PC-9 (cell line): ENCODE measurements at regions of chr18 and their contacts with region 1.

Region 1: DNA sequence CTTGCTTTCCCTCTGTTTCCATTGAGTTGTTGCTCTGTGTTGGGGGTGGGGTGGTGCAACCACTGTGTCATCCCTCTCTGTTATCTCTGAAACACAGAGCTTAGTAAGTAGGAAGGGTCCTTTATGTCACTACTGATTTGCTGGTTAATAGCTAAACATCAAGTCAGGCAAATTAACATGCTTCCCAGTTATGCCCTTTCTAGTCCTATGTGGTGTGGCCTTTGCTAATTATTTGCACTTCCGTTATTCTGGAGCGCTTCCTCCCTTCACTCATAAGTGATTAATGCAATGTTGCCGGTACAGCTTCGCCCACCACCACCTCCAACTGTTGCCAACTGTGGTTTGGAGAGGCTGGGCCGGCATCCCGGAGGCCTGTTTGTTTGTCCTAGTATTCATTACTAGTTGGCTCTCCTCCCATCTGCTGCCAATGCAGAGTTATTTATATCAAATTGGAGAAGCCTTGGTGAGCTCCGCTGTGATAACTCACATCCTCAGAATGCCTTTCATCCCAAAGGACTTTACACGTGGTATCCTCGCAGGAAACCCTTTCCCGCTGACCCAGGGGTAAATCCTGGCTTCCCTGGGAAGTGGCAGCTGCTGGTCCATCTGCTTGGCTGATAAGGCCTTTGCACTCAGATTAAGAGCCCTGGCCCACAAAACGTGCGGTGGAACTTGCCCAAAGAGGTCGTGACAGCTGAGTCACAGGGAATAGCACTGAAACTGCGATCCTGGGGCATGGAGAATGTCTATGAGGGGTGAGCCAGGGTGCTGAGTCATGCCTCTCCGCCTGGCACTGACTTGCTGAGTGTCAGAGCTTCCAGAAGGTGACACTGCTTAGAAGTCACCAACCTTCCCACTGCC is 72.0 kb upstream of the ZCCHC2 start:
- DNase-seq: peak; percentile 75 to 95
- H3K4me3 ChIP-seq: no peak overlapping the region; the same call in 1 of the 2 replicates
- H3K27ac ChIP-seq: peak overlapping the region; percentile 92
- H3K4me1 ChIP-seq: peaks cover 48% of the 10 kb centered on the region
- H3K27me3 ChIP-seq: no peaks in the 10 kb centered on the region
- CTCF ChIP-seq: no peak

Region 2: GRCh38 chr18:62486304-62486964 is 35.7 kb after region 1 on chr18:
- CTCF ChIA-PET with region 1: no interaction called
- POLR2A ChIA-PET with region 1: no interaction called
- intact Hi-C with region 1: loop called (anchors 1 kb)
- DNase-seq: peak; percentile 53 to 96
- H3K4me3 ChIP-seq: peak overlapping the region; percentile 37; the same call in 1 of the 2 replicates
- H3K27ac ChIP-seq: peak overlapping the region; percentile 95
- H3K4me1 ChIP-seq: peaks cover 25% of the 10 kb centered on the region
- H3K27me3 ChIP-seq: no peaks in the 10 kb centered on the region
- CTCF ChIP-seq: no peak